Cardiac septum (tissue), 1 donor: ENCODE measurements at regions of chr1 and their contacts with region 1.

Region 1: GRCh38 chr1:160726498-160727315 is 12.3 kb upstream of the SLAMF7 start:
- DNase-seq: peak; percentile 79

Region 2: DNA sequence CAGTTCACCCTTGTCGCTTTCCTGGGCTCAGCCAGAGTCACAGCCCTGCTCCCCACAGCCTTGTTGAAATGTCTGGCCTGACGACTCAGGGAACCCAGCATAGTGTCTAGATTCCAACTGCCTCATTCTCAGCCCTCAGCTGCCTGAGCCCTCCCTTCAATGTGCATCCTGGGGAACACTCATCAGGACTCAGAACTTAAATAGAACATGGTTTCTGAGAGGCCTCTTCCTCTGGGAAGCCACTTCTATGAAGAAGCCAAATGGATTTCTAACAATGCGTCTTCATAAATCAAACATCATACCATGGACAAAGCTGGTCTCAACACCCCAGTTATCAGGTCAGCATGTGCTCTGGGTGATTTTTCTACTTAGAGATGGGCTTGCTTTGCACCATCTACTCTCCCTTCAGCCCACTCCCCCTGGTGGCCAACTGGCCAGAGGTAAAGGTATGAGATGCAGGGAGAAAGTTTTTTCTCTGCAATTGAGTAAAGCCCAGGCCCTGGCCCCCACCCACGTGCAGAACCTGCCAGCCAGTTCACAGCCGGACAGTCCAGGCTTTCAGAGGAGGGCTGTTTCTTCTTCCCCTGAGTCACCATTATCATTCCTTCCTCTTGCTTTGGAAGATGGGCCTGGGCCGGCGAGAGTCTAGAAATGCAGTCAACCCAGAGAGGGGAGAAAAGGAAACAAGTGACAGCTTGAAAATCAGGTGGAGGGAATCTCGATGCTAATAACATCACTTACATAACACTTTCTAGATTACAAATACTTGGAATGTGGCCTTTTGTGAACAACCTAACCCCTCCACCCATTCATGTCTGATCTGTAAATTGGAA is 103.8 kb after region 1 on chr1:
- intact Hi-C with region 1: loop called (anchors 2 kb)
- DNase-seq: no peak

Region 3: DNA sequence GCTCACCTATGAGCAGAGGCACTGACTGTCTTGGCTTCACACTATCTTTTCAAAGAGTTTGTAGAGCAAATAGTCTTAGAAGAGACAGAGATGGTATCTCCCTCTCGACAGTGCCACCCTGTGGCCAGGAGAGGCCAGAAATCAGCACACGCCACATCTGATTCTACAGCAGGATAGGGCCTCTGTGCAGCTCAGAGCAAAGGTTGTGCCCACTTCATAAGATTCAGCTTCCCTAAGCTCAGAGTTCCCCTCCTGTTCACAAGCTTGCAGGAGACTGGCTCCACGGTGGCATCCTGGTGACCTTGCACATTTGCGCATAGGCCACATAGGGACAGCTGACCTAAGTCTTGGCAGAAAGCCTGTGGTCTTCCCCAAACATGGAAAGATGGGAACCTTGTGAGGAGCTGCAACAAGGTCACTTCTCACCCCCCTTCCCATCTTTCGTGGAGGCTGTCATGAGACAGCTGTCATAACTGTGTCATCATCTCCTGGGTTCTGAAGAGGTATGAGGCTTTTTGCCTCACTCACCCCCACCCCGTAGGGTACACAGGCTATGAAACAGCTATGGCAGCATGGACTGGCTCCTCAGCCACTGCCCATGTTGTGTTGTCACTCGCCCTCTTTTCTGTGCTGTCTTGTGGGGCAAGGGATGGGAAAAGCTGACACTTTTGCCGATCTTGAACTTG is 224.9 kb after region 1 on chr1:
- intact Hi-C with region 1: loop called (anchors 5 kb)
- DNase-seq: no peak

Region 4: GRCh38 chr1:161098210-161099068 is 371.7 kb after region 1 on chr1 and contains the start of gene KLHDC9:
- intact Hi-C with region 1: loop called (anchors 5 kb)
- DNase-seq: peak; percentile 83
- total RNA-seq, gene KLHDC9: 10.7 TPM